Activated CD4-positive, alpha-beta T cell treated with anti-CD3 and anti-CD28 coated beads, Interleukin-2, amount 10 ng/mL, durations not matched to agents 24 days and 14 days (primary cell): ENCODE measurements at regions of chr1 and their contacts with region 1.

Region 1: GRCh38 chr1:67174716-67175284 is 8.5 kb downstream of the IL23R start:
- DNase-seq: no peak
- H3K4me3 Mint-ChIP-seq: peak overlapping the region; percentile 42
- H3K27ac Mint-ChIP-seq: peak overlapping the region; percentile 95
- H3K4me1 Mint-ChIP-seq: peaks cover 48% of the 10 kb centered on the region
- H3K27me3 Mint-ChIP-seq: no peaks in the 10 kb centered on the region

Region 2: DNA sequence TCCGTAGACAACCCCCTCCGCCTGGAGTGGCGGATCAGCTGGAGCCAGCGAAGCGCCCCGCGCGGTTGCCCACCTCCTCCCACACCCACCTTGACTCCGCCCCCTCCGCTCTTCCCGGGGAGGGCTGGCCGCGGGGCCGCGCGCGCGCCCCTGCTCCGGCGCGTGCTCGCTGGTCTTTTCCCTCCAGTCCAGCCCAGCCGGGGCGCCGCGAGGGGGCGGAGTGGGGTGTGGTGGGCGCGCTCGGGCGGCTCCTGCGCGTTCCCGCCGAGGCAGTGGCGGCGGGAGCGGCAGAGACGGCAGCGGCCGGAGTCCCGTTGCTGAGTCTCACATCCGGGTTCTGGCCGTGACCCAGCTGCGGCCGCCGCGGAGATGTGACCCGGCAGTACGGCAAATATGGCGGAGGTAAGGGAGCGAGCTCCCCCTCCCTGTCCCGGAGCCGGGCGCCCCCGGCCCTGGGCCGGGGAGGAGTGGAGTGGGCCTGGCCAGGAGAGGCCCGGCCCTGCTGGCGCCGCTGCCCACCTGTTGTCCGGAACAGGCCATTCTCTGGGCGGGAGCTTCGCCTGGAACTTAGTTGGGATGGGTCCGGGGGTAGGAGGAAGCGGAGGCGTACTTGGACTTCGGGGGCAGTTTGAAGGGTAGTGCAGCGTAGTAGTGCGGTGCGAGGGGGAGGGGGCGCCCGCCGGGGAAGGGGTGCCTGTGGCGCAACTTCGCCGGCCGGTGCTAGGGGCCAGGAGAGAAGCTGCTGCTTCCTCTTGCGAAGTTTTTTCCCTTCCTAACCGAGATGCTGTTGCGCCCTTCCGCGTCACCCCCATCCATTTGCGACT is 244.6 kb before region 1 on chr1:
- intact Hi-C with region 1: loop called (anchors 5 kb)
- DNase-seq: peak; percentile 99
- H3K4me3 Mint-ChIP-seq: peak overlapping the region; percentile 96
- H3K27ac Mint-ChIP-seq: peak overlapping the region; percentile 99
- H3K4me1 Mint-ChIP-seq: peaks cover 50% of the 10 kb centered on the region
- H3K27me3 Mint-ChIP-seq: no peaks in the 10 kb centered on the region

Region 3: DNA sequence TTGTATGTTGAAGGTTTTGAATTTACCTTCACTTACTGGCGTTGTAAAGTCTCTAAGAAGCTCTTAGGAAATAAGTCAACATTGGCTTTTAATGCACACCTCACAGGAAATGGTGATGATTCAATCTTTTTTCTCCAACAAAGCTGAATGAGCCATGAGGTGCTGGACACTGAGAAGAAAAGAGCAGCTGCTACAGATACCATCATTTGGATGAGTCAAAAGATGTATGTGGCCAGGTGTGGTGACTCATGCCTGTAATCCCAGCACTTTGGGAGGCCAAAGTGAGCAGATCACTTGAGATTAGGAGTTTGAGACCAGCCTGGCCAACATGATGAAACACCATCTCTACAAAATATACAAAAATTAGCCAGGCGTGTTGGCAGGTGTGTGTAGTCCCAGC is 11.8 kb before region 1 on chr1:
- intact Hi-C with region 1: loop called (anchors 1 kb)
- DNase-seq: peak; percentile 83
- H3K4me3 Mint-ChIP-seq: peak overlapping the region; percentile 39
- H3K27ac Mint-ChIP-seq: peak overlapping the region; percentile 89
- H3K4me1 Mint-ChIP-seq: peaks cover 39% of the 10 kb centered on the region
- H3K27me3 Mint-ChIP-seq: no peaks in the 10 kb centered on the region

Region 4: DNA sequence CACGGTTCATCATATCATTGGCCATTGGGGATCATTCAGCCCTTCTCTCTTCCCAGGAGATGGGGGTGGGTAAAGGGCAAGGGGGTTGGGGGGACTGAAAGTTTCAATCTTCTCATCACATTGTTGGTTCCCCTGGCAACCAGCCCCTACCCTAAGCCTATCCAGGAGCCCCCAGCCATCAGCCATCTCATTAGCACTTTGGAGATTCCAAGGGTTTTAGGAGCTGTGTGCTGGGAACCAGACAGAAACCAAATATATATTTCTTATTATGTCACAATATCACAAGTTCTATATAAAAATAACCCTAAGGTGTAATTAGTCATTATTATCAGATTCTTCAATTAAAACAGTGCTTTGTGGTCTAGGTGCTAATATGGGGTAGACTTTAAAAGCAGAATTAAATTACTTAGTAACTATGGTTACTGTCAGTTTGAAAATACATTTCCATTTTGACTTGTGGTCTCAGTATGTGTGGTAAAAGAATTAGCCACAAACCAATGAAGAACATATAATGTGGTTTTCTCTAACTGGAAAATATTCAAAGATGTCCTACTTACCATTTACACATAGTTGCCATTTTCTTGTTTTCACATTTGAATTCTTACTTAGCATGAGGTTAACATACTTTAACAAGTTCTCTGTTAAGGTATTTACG is 19.5 kb after region 1 on chr1:
- intact Hi-C with region 1: loop called (anchors 1 kb)
- DNase-seq: peak; percentile 66
- H3K4me3 Mint-ChIP-seq: no peak overlapping the region
- H3K27ac Mint-ChIP-seq: peak overlapping the region; percentile 86
- H3K4me1 Mint-ChIP-seq: peaks cover 8% of the 10 kb centered on the region
- H3K27me3 Mint-ChIP-seq: no peaks in the 10 kb centered on the region

Region 5: DNA sequence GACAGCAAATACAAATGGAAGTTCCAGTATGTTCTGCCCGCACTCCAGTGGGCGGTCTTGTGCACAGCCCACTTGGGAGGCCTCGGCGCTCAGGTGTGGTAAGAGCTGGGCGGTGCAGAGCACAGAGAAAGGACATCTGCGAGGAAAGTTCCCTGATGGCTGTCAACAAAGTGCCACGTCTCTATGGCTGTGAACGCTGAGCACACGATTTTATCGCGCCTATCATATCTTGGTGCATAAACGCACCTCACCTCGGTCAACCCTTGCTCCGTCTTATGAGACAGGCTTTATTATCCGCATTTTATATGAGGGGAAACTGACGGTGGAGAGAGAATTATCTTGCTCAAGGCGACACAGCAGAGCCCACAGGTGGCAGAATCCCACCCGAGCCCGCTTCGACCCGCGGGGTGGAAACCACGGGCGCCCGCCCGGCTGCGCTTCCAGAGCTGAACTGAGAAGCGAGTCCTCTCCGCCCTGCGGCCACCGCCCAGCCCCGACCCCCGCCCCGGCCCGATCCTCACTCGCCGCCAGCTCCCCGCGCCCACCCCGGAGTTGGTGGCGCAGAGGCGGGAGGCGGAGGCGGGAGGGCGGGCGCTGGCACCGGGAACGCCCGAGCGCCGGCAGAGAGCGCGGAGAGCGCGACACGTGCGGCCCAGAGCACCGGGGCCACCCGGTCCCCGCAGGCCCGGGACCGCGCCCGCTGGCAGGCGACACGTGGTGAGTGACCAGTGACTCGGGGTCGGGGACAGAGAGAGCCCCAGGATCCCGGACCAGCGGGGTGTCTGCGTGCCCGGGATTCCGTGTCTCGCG is 132.7 kb after region 1 on chr1 and contains the start of gene IL12RB2:
- intact Hi-C with region 1: loop called (anchors 1 kb)
- DNase-seq: peak; percentile 93
- H3K4me3 Mint-ChIP-seq: peak within 1 kb of the TSS; percentile 97
- H3K27ac Mint-ChIP-seq: peak within 1 kb of the TSS; percentile 100
- H3K4me1 Mint-ChIP-seq: peaks cover 64% of the 10 kb centered on the region
- H3K27me3 Mint-ChIP-seq: no peaks in the 10 kb centered on the region
- total RNA-seq, gene IL12RB2: 138 and 146 TPM in 2 replicates

Region 6: DNA sequence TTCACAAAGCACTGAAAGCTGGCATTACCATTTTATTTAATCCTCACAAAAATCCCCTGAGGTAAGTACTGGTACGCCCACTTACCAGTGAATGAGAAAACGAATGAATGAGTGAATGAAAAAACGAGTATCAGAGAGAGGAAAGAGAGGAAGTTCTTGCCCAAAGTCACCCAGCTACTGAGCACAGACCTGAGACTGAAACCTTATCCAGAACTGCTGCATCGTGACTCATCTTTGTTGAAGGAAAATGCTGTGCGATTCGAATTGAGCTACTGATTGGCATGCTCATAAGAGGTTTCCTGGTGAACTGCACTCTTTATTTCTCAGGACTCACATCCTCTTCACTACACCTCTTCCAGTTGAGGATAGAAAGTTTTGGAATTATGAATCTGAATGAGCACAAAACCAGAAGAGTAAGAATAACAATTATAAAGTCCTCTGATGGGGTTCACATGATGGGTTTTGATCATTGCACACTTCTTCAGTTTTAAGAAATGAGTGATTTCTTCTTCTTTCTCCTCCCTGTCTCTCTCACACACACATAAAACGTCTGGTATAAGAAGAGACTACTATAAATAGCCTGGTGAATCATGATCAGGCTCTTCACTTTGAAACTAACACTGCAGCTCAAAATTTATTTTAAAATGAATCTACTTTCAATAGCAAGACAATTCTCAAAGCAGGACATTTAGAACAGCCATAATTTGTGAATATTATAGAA is 165.0 kb after region 1 on chr1:
- intact Hi-C with region 1: loop called (anchors 1 kb)
- DNase-seq: peak; percentile 85
- H3K4me3 Mint-ChIP-seq: peak overlapping the region; percentile 68
- H3K27ac Mint-ChIP-seq: peak overlapping the region; percentile 94
- H3K4me1 Mint-ChIP-seq: peaks cover 77% of the 10 kb centered on the region
- H3K27me3 Mint-ChIP-seq: no peaks in the 10 kb centered on the region

Region 7: GRCh38 chr1:67414574-67414973 is 239.8 kb after region 1 on chr1:
- intact Hi-C with region 1: no loop called
- DNase-seq: no peak
- H3K4me3 Mint-ChIP-seq: no peak overlapping the region
- H3K27ac Mint-ChIP-seq: no peak overlapping the region
- H3K4me1 Mint-ChIP-seq: peaks cover 36% of the 10 kb centered on the region
- H3K27me3 Mint-ChIP-seq: no peaks in the 10 kb centered on the region